ENCODE measurements at regions of chr19 and their contacts with region 1.

Region 1: DNA sequence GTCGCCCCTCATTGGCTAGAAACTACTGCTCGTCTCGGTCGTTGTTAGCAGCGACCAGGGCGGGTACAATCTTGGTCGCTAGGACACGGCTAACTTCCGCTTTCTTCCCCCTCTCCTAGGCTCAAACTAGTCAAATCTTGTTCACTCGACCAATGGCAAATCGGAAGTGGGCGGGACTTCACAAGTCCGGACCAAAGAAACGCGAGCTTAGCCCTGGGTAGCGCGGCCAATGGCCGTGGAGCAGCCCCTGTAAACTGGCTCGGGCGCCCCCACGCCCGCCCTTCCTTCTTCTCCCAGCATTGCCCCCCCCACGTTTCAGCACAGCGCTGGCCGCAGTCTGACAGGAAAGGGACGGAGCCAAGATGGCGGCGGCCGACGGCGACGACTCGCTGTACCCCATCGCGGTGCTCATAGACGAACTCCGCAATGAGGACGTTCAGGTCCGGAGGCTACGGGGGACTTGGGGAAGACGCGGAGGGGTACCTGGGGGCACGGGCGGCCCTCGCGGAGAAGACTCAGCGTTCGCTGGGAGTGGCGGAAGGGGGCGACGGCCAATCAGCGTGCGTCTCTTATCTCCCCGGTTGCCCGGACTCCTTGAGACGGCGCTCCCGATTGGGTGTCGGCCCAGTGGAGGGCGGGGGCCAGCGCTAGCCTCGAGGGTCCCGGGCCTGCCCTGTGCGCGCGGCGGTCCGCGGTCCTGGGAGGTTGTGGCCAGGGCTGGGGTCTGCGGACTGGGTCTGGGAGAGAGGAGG is at the start of gene PPP2R1A:
- DNase-seq: peak; percentile 95 to 100 (median 98)
- ATAC-seq: peak; percentile 81
- H3K4me3 ChIP-seq: peak within 1 kb of the TSS; percentile 81
- H3K4me3 Mint-ChIP-seq: peak within 1 kb of the TSS; percentile 95
- H3K27ac ChIP-seq: peak within 1 kb of the TSS; percentile 98
- H3K27ac Mint-ChIP-seq: peak within 1 kb of the TSS; percentile 96
- H3K4me1 ChIP-seq: peaks cover 56% of the 10 kb centered on the region
- H3K4me1 Mint-ChIP-seq: peaks cover 54% of the 10 kb centered on the region
- H3K27me3 ChIP-seq: no peaks in the 10 kb centered on the region
- H3K27me3 Mint-ChIP-seq: no peaks in the 10 kb centered on the region
- CTCF ChIP-seq: no peak
- total RNA-seq, gene PPP2R1A: 151 to 157 TPM

Region 2: DNA sequence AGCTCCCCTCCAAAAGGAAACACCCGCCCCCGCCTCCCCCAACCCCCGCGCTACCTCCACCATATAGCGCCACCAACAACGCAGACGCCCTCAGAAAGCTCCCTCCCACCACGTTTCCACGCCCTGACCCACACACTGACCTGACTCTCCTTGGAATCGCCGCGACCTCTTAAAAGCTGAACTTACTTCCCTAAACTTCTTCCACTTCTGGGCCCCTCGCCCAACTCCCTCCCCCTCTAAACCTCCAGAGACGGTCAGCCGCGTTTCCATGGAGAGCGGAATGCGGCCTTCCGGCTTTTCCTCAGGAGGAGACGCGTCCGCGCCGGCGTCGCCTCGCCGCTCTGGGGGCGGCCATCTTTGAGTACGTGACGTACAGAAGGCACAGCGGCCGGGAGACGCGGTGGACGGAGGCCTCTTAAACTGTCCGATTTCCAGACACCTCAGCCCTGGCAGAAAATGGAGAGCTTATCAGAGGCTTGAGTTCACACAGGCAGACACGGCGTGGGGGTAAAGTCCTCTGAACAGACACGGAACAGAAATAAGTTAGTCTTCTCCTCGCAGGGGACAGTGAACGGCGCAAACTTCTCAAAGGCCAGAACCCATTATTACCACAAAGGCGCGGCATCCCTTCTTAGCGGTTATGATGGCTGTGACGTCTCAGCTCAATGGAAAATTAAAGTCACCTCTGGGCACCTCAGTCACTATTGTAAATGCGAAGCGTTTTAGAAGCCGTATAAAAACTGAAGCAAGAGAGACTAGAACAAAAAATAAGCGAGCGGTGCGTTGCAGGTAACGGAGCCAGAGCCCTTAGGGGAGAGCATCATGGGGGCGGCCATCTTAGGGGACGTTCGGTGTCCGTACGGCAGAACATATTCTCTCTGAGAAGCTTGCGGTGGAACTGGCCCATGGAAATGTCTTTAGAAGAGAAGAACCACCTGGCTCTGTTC is 141.1 kb before region 1 on chr19 and contains the start of gene ZNF432:
- CTCF ChIA-PET with region 1: no interaction called
- POLR2A ChIA-PET with region 1: interaction called, 28 read pairs
- intact Hi-C with region 1: loop called in 1 of 2 experiments (anchors 5 kb)
- DNase-seq: peak; percentile 74 to 91 (median 80)
- ATAC-seq: peak; percentile 85
- H3K4me3 ChIP-seq: peak within 1 kb of the TSS; percentile 79
- H3K4me3 Mint-ChIP-seq: peak within 1 kb of the TSS; percentile 98
- H3K27ac ChIP-seq: peak within 1 kb of the TSS; percentile 89 to 95
- H3K27ac Mint-ChIP-seq: peak within 1 kb of the TSS; percentile 97
- H3K4me1 ChIP-seq: peaks cover 5% of the 10 kb centered on the region
- H3K4me1 Mint-ChIP-seq: peaks cover 37% of the 10 kb centered on the region
- H3K27me3 ChIP-seq: no peaks in the 10 kb centered on the region
- H3K27me3 Mint-ChIP-seq: no peaks in the 10 kb centered on the region
- CTCF ChIP-seq: no peak
- total RNA-seq, gene ZNF432: 16.3 to 19.2 TPM

Region 3: GRCh38 chr19:52095172-52096014 is 94.5 kb before region 1 on chr19 and contains the start of gene ZNF841:
- CTCF ChIA-PET with region 1: no interaction called
- POLR2A ChIA-PET with region 1: no interaction called
- intact Hi-C with region 1: loop called in 1 of 2 experiments (anchors 1 kb)
- DNase-seq: peak; percentile 69 to 90 (median 78)
- ATAC-seq: peak; percentile 96
- H3K4me3 ChIP-seq: peak within 1 kb of the TSS; percentile 77
- H3K4me3 Mint-ChIP-seq: peak within 1 kb of the TSS; percentile 99
- H3K27ac ChIP-seq: peak within 1 kb of the TSS in 1 of 2 donors; percentile 58
- H3K27ac Mint-ChIP-seq: peak within 1 kb of the TSS; percentile 95
- H3K4me1 ChIP-seq: peaks cover 16% of the 10 kb centered on the region
- H3K4me1 Mint-ChIP-seq: peaks cover 40% of the 10 kb centered on the region
- H3K27me3 ChIP-seq: no peaks in the 10 kb centered on the region
- H3K27me3 Mint-ChIP-seq: no peaks in the 10 kb centered on the region
- CTCF ChIP-seq: no peak
- total RNA-seq, gene ZNF841: 20.0 TPM

Region 4: GRCh38 chr19:52139252-52140031 is 50.5 kb before region 1 on chr19 and contains the start of gene ZNF616:
- CTCF ChIA-PET with region 1: interaction called, 23 read pairs
- POLR2A ChIA-PET with region 1: interaction called, 18 read pairs
- intact Hi-C with region 1: loop called (anchors 1 kb)
- DNase-seq: peak; percentile 50 to 99 (median 84)
- ATAC-seq: peak; percentile 43
- H3K4me3 ChIP-seq: peak within 1 kb of the TSS; percentile 100
- H3K4me3 Mint-ChIP-seq: peak within 1 kb of the TSS; percentile 97
- H3K27ac ChIP-seq: peak within 1 kb of the TSS; percentile 79 to 92
- H3K27ac Mint-ChIP-seq: peak within 1 kb of the TSS; percentile 93
- H3K4me1 ChIP-seq: peaks cover 23% of the 10 kb centered on the region
- H3K4me1 Mint-ChIP-seq: peaks cover 38% of the 10 kb centered on the region
- H3K27me3 ChIP-seq: no peaks in the 10 kb centered on the region
- H3K27me3 Mint-ChIP-seq: no peaks in the 10 kb centered on the region
- CTCF ChIP-seq: peak; percentile 90
- total RNA-seq, gene ZNF616: 0.99 to 1.5 TPM

Region 5: DNA sequence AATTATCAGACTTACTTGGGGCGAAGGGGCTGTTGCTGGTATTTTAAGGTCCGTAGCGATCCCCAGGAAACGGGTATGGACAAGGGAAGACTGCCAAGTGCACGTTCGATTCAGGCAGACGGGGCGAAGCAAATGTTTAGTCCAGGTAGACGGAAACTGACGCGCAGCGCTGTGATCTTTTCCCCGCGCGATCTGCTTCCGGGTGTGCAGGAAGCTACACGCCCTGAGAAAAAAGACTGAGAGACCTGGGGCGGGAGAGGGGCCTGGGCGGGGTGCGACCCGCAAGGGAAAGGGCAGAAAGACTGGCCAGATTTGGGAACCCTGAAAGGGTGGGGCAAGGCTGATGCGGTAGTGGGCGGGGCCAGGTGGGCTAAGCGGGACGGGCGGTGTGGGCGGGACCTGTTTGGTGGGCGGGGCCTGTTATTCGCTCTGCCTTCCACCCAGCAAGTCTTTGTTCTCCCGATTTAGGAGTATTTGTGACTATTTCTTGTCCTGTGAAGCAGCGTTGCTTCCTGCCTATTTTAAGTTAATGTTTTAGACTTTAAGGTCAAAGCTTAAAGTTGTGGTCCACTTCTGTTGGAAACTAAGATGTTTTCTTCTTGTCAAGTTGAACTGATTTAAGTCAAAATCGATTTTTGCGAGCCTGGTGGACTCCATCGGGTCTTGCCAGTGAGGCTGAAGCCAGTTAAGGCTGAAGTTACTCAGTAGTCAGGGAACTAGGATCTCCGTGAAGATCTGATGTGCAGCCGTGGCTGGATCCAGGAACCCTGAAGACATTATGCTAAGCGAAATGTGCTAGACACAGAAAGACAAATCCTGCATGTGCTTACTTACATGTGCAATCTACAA is 18.4 kb before region 1 on chr19 and contains the start of gene ZNF836:
- CTCF ChIA-PET with region 1: interaction called, 10 read pairs
- POLR2A ChIA-PET with region 1: interaction called, 52 read pairs
- intact Hi-C with region 1: loop called (anchors 1 kb)
- DNase-seq: peak; percentile 84 to 97 (median 90)
- ATAC-seq: peak; percentile 92
- H3K4me3 ChIP-seq: peak within 1 kb of the TSS; percentile 79
- H3K4me3 Mint-ChIP-seq: peak within 1 kb of the TSS; percentile 93
- H3K27ac ChIP-seq: peak within 1 kb of the TSS; percentile 82 to 83
- H3K27ac Mint-ChIP-seq: peak within 1 kb of the TSS; percentile 95
- H3K4me1 ChIP-seq: peaks cover 26% of the 10 kb centered on the region
- H3K4me1 Mint-ChIP-seq: peaks cover 36% of the 10 kb centered on the region
- H3K27me3 ChIP-seq: no peaks in the 10 kb centered on the region
- H3K27me3 Mint-ChIP-seq: no peaks in the 10 kb centered on the region
- CTCF ChIP-seq: no peak
- total RNA-seq, gene ZNF836: 24.1 to 26.2 TPM

Region 6: DNA sequence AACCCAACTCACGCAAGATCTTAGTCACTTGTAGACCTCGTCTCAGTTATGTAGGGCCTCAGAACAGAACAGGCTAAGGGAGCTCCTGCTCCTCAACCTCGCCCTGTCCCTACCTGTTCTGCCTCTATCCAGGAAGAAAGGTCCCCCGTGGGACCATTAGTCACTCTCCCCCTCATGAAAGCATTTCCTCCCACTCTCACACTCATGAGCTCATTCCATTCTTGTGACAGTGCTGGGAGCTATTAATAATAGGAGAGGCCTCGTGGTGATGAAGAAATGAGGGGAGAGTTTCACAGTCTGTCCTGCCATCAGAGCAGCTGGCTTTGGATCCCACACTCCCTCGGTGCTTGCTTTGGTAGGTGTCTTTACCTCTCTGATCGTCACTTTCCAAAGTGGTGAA is 10.1 kb after region 1 on chr19:
- CTCF ChIA-PET with region 1: interaction called, 3 read pairs
- POLR2A ChIA-PET with region 1: interaction called, 14 read pairs
- intact Hi-C with region 1: no loop called
- DNase-seq: no peak
- ATAC-seq: no peak
- H3K4me3 ChIP-seq: no peak overlapping the region
- H3K4me3 Mint-ChIP-seq: no peak overlapping the region
- H3K27ac ChIP-seq: no peak overlapping the region
- H3K27ac Mint-ChIP-seq: no peak overlapping the region
- H3K4me1 ChIP-seq: peaks cover 17% of the 10 kb centered on the region
- H3K4me1 Mint-ChIP-seq: peaks cover 84% of the 10 kb centered on the region
- H3K27me3 ChIP-seq: no peaks in the 10 kb centered on the region
- H3K27me3 Mint-ChIP-seq: no peaks in the 10 kb centered on the region
- CTCF ChIP-seq: no peak

Region 7: DNA sequence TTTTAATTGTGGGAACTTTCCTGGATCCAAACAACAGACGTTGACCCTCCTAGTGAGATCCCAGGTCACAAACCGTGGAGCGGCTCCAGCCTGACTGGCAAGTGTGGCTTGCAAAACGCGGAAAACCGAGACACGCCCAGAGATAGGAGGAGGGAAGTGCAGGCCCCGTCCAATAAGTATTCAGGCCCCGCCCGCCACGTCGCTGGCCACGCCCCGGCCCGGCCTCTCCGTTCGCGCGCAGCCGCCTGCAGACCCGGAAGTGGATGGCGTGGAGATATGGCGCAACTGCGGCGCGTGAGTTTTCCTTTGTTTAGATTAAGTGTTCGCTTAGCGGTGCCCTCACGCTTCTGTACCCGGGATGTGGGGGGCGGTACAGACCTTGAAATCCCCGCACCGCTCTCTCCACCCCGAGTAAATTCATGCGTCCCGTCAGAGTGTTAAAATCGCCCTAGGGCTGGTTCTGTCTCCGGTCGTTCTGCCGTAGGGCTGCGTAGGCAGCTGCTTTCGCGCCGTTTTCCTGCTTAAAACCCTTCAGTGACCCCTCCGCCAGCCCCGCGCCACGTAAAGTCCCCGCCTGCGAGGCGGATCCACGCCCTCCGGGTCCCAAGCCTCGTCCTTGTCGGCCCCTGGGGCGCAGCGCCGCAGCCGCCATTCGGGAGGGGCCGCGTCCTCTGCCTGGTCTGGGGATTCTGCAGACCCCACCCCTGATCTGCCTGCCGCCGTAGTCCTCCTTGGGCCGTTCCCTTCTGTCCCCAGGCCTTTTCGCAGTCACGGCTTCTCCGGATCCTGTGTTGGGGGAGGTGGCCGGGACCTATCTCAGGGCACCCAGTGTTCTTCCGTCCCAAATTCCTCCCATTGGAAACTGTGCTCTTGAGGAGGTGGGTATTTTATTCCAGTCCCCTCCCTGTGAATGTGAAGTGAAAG is 79.7 kb after region 1 on chr19 and contains the start of gene ZNF766:
- CTCF ChIA-PET with region 1: no interaction called
- POLR2A ChIA-PET with region 1: interaction called, 6 read pairs
- intact Hi-C with region 1: loop called (anchors 2 to 5 kb)
- DNase-seq: peak; percentile 93 to 99 (median 97)
- ATAC-seq: peak; percentile 98
- H3K4me3 ChIP-seq: peak within 1 kb of the TSS; percentile 100
- H3K4me3 Mint-ChIP-seq: peak within 1 kb of the TSS; percentile 97
- H3K27ac ChIP-seq: peak within 1 kb of the TSS; percentile 95 to 97
- H3K27ac Mint-ChIP-seq: peak within 1 kb of the TSS; percentile 90
- H3K4me1 ChIP-seq: peaks cover 38% of the 10 kb centered on the region
- H3K4me1 Mint-ChIP-seq: peaks cover 46% of the 10 kb centered on the region
- H3K27me3 ChIP-seq: no peaks in the 10 kb centered on the region
- H3K27me3 Mint-ChIP-seq: no peaks in the 10 kb centered on the region
- CTCF ChIP-seq: no peak
- total RNA-seq, gene ZNF766: 39.3 to 43.2 TPM

Measured in CD4-positive, alpha-beta T cell (primary cell).